Dendritic cell treated with granulocyte-macrophage colony-stimulating factor and Interleukin-4, amounts not matched to agents 40 ng/mL and 50 ng/mL, for 4 days (primary cell): ENCODE measurements at regions of chr6 and their contacts with region 1.

Region 1: DNA sequence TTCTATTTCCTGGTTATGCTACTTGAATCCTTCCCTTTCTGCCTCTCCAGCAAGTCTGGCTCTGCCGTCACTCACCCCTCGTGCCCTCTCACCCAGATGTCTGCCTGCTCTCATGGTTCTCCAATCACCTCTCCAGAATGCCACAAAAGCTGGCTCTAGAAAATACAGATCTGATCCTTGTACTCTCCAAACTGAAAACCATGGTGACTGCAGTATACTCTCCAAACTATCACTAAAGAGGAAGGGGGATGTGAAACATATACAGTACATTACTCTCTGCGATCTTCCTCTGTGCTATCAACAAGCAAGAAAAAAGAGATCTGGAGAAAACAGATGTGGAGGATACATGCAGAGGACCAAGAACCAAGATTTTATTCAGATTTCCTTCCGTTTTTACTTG is 91.1 kb downstream of the ATXN1 start:
- H3K4me3 Mint-ChIP-seq: peak overlapping the region; percentile 38
- H3K27ac Mint-ChIP-seq: peak overlapping the region; percentile 73
- H3K4me1 Mint-ChIP-seq: peaks cover 86% of the 10 kb centered on the region
- H3K27me3 Mint-ChIP-seq: no peaks in the 10 kb centered on the region

Region 2: DNA sequence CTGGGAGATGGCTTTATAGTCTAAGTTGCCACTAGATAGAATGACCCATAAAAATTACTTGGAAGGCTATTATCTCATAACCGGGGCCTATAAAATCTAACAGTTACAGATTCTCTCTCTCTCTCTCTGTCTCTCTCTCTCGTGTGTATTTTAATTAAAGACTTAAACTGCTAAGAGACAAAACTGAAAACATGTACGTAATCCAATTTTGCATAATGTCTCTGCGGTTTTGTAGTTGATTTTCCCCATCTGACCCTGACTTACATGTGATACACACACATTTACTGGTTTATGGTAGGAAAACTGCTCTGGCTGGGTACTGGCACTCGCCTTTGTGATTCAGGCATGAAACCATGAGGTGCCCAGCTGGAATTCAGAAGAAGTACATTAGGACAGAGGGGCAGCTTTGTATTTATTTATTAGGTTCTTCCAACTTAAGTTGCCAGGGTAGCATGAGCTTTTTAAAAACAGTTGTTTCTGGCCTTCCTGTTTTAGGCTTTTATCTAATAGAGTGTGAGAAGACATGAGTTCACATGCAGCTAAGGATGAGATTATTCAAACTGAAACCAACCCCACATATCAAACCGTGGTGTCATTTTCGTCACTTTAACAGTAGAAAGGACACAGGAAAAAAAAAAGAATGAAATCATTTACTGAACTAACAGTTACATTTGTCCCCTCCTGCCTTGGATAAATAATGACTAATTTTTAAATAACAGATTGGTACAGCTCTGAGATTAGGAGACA is 249.3 kb before region 1 on chr6:
- intact Hi-C with region 1: no loop called
- H3K4me3 Mint-ChIP-seq: no peak overlapping the region
- H3K27ac Mint-ChIP-seq: peak overlapping the region; percentile 84
- H3K4me1 Mint-ChIP-seq: peaks cover 24% of the 10 kb centered on the region
- H3K27me3 Mint-ChIP-seq: no peaks in the 10 kb centered on the region

Region 3: DNA sequence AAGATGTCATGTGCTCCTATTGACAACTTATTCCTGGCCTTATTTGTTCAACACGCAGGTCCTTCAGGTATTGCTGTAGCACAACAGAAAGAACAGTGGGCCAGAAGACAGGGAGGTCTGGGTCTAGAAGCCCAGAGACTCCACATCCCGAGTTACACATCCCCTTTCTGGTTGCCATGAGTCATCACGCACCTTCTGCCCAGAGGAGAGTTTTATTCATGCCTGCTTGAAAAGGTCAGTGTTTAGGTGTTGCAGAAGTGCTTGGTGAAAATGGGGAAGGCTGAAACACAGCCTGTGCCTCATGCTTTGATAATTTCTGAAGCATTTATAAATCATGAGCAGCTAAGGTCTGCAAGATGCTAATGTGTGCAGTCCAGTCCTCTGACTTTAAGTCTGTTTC is 175.4 kb before region 1 on chr6:
- intact Hi-C with region 1: no loop called
- H3K4me3 Mint-ChIP-seq: no peak overlapping the region
- H3K27ac Mint-ChIP-seq: peak overlapping the region; percentile 26
- H3K4me1 Mint-ChIP-seq: peaks cover 52% of the 10 kb centered on the region
- H3K27me3 Mint-ChIP-seq: no peaks in the 10 kb centered on the region

Region 4: GRCh38 chr6:16602035-16602434 is 68.1 kb before region 1 on chr6:
- intact Hi-C with region 1: no loop called
- H3K4me3 Mint-ChIP-seq: no peak overlapping the region
- H3K27ac Mint-ChIP-seq: no peak overlapping the region
- H3K4me1 Mint-ChIP-seq: peaks cover under 1% of the 10 kb centered on the region
- H3K27me3 Mint-ChIP-seq: no peaks in the 10 kb centered on the region

Region 5: DNA sequence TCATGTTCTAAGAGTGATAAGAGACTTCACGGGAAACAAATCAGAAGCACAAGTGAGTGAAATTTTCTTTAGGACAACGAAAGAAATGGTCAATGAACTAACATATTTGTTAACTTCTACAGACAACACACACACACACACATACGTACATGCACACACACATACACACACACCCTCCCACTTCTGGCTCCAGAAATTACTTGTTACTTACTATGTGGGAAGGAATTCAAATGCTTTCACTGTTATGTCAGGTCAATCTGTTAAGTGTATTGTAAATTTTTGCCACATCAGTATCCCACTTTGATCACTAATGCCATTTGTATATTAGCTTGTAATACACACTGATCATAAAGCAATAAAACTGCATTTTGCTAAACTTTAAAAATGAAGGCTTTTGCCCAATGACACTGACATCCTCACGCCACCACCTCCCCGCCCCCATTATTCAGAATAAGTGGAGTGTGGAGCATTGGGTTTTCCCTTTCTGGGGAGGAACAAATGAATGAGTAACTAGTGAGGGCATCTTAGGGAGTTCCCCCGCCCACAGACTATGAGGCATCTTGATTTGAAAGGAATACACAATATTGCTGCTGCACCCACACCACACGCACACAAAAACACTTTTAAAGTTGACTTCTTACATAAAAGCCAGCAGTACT is 14.8 kb after region 1 on chr6:
- intact Hi-C with region 1: loop called (anchors 2 kb)
- H3K4me3 Mint-ChIP-seq: no peak overlapping the region
- H3K27ac Mint-ChIP-seq: peak overlapping the region; percentile 72
- H3K4me1 Mint-ChIP-seq: peaks cover 68% of the 10 kb centered on the region
- H3K27me3 Mint-ChIP-seq: no peaks in the 10 kb centered on the region

Region 6: DNA sequence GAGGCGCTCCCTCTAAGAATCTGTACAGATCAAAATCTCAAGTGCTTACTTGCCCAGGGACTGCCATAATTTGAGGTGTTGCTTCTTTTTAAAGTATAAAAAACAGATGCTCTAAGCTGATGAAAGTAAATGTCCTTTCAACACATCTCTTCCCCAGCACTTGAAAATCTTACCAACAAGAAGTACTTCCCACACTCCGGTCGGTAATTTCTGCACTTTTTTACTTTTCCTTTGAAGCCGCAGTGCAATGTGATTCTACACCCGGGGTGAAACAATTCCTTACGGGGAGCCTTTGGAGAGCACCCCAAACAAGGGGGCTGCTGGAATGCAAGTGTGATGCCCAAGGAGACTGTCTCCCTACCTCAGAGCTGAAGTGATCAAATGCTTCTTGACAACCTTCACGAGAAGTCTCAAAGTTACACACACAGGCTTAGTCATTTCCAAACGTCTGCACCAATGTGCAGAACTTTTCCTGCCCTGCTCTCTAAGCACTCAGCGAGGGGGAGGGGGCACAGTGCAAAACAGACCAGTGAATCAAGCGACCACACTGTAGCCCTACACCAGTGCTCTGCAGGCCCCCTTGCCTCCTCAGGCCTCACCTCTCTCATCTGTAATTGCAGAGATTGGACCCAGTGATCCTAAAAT is 34.3 kb after region 1 on chr6:
- intact Hi-C with region 1: loop called (anchors 5 kb)
- H3K4me3 Mint-ChIP-seq: peak overlapping the region; percentile 61
- H3K27ac Mint-ChIP-seq: peak overlapping the region; percentile 95
- H3K4me1 Mint-ChIP-seq: peaks cover 81% of the 10 kb centered on the region
- H3K27me3 Mint-ChIP-seq: no peaks in the 10 kb centered on the region

Region 7: GRCh38 chr6:16723826-16724225 is 53.6 kb after region 1 on chr6:
- intact Hi-C with region 1: loop called (anchors 2 kb)
- H3K4me3 Mint-ChIP-seq: peak overlapping the region; percentile 37
- H3K27ac Mint-ChIP-seq: peak overlapping the region; percentile 81
- H3K4me1 Mint-ChIP-seq: peaks cover 71% of the 10 kb centered on the region
- H3K27me3 Mint-ChIP-seq: no peaks in the 10 kb centered on the region